Heart right ventricle (tissue), 16 donors: ENCODE measurements at regions of chr10 and their contacts with region 1.

Region 1: GRCh38 chr10:35136263-35136815 is 9.7 kb downstream of the CREM start:
- DNase-seq: no peak
- ATAC-seq: peak in 6 of 8 donors; percentile 28 to 69 (median 48)
- H3K4me3 ChIP-seq: no peak overlapping the region
- H3K27ac ChIP-seq: peak overlapping the region in 1 of 10 donors; percentile 33
- H3K4me1 ChIP-seq: peaks cover 0 to 35% (median 18%) of the 10 kb centered on the region in 9 donors
- H3K27me3 ChIP-seq: no peaks in the 10 kb centered on the region
- CTCF ChIP-seq: no peak

Region 2: DNA sequence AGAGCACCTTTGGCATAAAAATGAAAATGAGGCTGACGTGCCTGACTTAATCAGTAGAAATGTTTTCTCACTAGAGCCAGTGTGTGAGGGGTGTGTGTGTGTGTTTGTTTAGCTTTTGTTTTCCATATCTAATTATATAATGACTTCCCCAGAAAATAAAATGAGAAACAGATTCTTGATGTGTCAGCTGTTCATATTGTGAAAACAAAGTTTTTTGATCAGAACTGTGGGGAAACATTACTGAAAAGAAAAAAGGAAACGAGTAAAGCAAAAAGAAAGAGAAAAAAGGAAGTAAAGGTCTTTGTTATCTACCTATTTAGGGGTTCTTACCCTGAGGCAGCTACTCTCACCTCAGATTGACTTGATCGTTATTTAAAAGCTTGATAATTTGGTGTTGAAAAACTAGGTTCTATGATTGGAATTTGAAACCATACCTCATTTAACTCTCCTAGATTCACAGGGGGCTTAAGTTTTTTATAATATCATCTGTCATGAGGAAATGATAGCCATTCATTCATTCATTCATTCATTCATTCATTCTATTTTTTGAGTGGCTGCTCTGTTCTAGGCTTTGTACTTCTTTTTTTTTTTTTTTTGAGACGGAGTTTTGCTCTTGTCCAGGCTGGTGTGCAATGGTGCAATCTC is 48.3 kb after region 1 on chr10:
- intact Hi-C with region 1: loop called in 1 of 10 experiments (anchors 5 kb)
- DNase-seq: no peak
- ATAC-seq: peak in 1 of 8 donors; percentile 27
- H3K4me3 ChIP-seq: no peak overlapping the region
- H3K27ac ChIP-seq: peak overlapping the region in 5 of 10 donors; percentile 4 to 69 (median 22)
- H3K4me1 ChIP-seq: peaks cover 0 to 14% (median 3%) of the 10 kb centered on the region in 9 donors
- H3K27me3 ChIP-seq: no peaks in the 10 kb centered on the region
- CTCF ChIP-seq: no peak